ENCODE measurements at regions of chr9 and their contacts with region 1.

Region 1: GRCh38 chr9:127244609-127245601 is 19.7 kb upstream of the GARNL3 start:
- DNase-seq: peak; percentile 99
- H3K4me3 Mint-ChIP-seq: peak overlapping the region; percentile 87
- H3K27ac Mint-ChIP-seq: peak overlapping the region; percentile 58
- H3K4me1 Mint-ChIP-seq: peaks cover 8% of the 10 kb centered on the region
- H3K27me3 Mint-ChIP-seq: peaks cover 21% of the 10 kb centered on the region

Region 2: GRCh38 chr9:127224178-127224882 is 20.6 kb before region 1 on chr9:
- intact Hi-C with region 1: loop called (anchors 1 kb)
- DNase-seq: peak; percentile 95
- H3K4me3 Mint-ChIP-seq: peak overlapping the region; percentile 84
- H3K27ac Mint-ChIP-seq: peak overlapping the region; percentile 82
- H3K4me1 Mint-ChIP-seq: peaks cover 19% of the 10 kb centered on the region
- H3K27me3 Mint-ChIP-seq: peaks cover 54% of the 10 kb centered on the region

Region 3: DNA sequence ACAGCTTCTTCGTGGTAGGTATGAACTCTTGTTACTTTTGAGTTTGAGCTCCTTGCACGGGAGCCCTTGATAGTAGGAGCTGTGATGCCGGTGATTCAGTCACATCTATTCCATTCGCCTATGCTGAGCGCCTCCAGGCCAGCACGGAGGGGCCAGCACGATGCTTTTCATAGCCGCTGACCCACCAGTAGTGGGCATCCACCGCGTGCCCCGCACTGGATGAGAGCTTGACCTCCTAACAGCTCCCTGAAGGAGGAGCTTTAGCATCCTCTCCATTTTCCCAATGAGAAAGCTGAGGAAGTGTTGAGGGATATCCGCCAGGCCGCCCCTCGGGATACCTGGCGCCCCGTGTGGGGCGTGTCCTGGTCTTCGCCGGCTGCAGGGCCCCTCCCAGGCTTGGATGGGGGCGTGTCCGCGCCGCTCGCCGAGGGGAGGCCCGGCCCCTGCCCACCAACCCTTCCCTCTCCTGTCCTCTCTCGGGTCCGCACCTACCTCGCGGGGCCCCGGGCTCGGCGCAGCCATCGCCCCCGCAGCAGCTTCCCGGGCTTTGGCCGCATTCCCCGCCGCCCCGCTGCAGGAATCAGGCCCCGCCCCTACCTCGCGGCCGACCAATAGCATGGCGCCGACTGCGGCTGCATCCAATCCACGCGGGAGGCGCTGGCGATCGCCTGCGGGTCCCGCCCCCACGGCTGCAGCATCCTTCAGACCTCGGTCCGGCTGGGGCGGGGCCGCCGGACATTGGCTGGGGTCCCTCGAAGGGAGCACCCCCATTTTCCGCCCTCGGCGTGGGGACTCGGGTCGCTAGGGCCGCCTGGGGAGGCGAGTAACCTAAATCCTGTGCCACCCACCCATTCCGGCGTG is 685.6 kb after region 1 on chr9 and contains the start of gene PIP5KL1:
- intact Hi-C with region 1: no loop called
- DNase-seq: peak; percentile 95
- H3K4me3 Mint-ChIP-seq: peak within 1 kb of the TSS; percentile 82
- H3K27ac Mint-ChIP-seq: peak within 1 kb of the TSS; percentile 70
- H3K4me1 Mint-ChIP-seq: peaks cover 28% of the 10 kb centered on the region
- H3K27me3 Mint-ChIP-seq: peaks cover 9% of the 10 kb centered on the region
- total RNA-seq, gene PIP5KL1: 0.89 and 0.90 TPM in 2 replicates